CD4-positive, alpha-beta memory T cell (primary cell): ENCODE measurements at regions of chr12 and their contacts with region 1.

Region 1: GRCh38 chr12:62603061-62603810 is 136.6 kb downstream of the MON2 start:
- DNase-seq: peak; percentile 85 to 91 (median 88)
- H3K4me3 ChIP-seq: peak overlapping the region; percentile 64 to 94
- H3K4me3 Mint-ChIP-seq: peak overlapping the region; percentile 86 to 97 (median 94)
- H3K27ac ChIP-seq: peak overlapping the region; percentile 100
- H3K27ac Mint-ChIP-seq: peak overlapping the region; percentile 93 to 100 (median 99)
- H3K4me1 ChIP-seq: peaks cover 39% of the 10 kb centered on the region
- H3K4me1 Mint-ChIP-seq: peaks cover 27 to 55% (median 35%) of the 10 kb centered on the region in 4 donors
- H3K27me3 ChIP-seq: no peaks in the 10 kb centered on the region
- H3K27me3 Mint-ChIP-seq: no peaks in the 10 kb centered on the region

Region 2: GRCh38 chr12:62435303-62436163 is 167.7 kb before region 1 on chr12:
- CTCF ChIA-PET with region 1: interaction called, 7 read pairs
- POLR2A ChIA-PET with region 1: interaction called, 11 read pairs
- intact Hi-C with region 1: no loop called
- DNase-seq: peak in 4 of 5 donors; percentile 17 to 22 (median 20)
- H3K4me3 ChIP-seq: peak overlapping the region; percentile 64 to 78
- H3K4me3 Mint-ChIP-seq: peak overlapping the region; percentile 79 to 90 (median 86)
- H3K27ac ChIP-seq: no peak overlapping the region
- H3K27ac Mint-ChIP-seq: peak overlapping the region in 3 of 7 donors; percentile 2 to 33 (median 29)
- H3K4me1 ChIP-seq: peaks cover 21% of the 10 kb centered on the region
- H3K4me1 Mint-ChIP-seq: peaks cover 8 to 21% (median 16%) of the 10 kb centered on the region in 4 donors
- H3K27me3 ChIP-seq: peaks cover 11% of the 10 kb centered on the region
- H3K27me3 Mint-ChIP-seq: peaks cover 5 to 6% of the 10 kb centered on the region in 2 donors

Region 3: GRCh38 chr12:62581288-62582064 is 21.8 kb before region 1 on chr12:
- CTCF ChIA-PET with region 1: interaction called, 19 read pairs
- POLR2A ChIA-PET with region 1: interaction called, 14 read pairs
- intact Hi-C with region 1: loop called (anchors 2 kb)
- DNase-seq: peak in 4 of 5 donors; percentile 34 to 49 (median 38)
- H3K4me3 ChIP-seq: no peak overlapping the region
- H3K4me3 Mint-ChIP-seq: no peak overlapping the region
- H3K27ac ChIP-seq: no peak overlapping the region
- H3K27ac Mint-ChIP-seq: no peak overlapping the region
- H3K4me1 ChIP-seq: no peaks in the 10 kb centered on the region
- H3K4me1 Mint-ChIP-seq: peaks cover 0 to 2% (median 0%) of the 10 kb centered on the region in 4 donors
- H3K27me3 ChIP-seq: no peaks in the 10 kb centered on the region
- H3K27me3 Mint-ChIP-seq: no peaks in the 10 kb centered on the region

Region 4: DNA sequence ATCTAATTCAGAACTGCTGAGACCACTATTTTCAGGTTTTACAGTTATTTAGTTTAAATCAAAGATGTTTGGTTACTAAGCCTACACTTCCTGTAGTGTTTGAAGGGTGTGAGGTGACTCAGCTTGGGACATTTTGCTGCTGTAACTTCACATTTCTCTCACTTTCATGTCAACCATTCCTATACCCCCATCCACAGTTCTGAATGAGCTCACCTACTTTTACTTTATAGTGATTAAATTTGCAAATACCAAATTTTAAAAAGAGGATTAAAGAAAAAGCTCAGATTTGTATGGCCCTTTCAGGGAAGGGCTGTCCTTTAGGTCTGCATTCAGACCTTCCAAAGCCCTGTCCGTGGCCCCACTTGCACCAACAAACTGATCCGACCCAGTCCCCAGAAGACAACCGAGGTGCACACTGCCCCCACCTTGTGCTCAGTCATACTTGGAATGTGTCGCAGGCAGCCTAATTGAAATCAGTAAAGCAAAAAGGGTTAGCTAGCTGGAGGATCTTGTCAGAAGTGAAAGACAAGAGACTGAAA is 37.7 kb after region 1 on chr12:
- CTCF ChIA-PET with region 1: no interaction called
- POLR2A ChIA-PET with region 1: interaction called, 16 read pairs
- intact Hi-C with region 1: loop called (anchors 2 kb)
- DNase-seq: peak in 4 of 5 donors; percentile 6 to 54 (median 19)
- H3K4me3 ChIP-seq: no peak overlapping the region
- H3K4me3 Mint-ChIP-seq: peak overlapping the region; percentile 21 to 74 (median 64)
- H3K27ac ChIP-seq: no peak overlapping the region
- H3K27ac Mint-ChIP-seq: peak overlapping the region in 6 of 7 donors; percentile 5 to 83 (median 38)
- H3K4me1 ChIP-seq: peaks cover 17% of the 10 kb centered on the region
- H3K4me1 Mint-ChIP-seq: peaks cover 9 to 15% (median 13%) of the 10 kb centered on the region in 4 donors
- H3K27me3 ChIP-seq: no peaks in the 10 kb centered on the region
- H3K27me3 Mint-ChIP-seq: peaks cover 1 to 2% of the 10 kb centered on the region in 2 donors

Region 5: GRCh38 chr12:62724947-62725447 is 121.8 kb after region 1 on chr12:
- CTCF ChIA-PET with region 1: no interaction called
- POLR2A ChIA-PET with region 1: no interaction called
- intact Hi-C with region 1: no loop called
- DNase-seq: no peak
- H3K4me3 ChIP-seq: no peak overlapping the region
- H3K4me3 Mint-ChIP-seq: no peak overlapping the region
- H3K27ac ChIP-seq: no peak overlapping the region
- H3K27ac Mint-ChIP-seq: no peak overlapping the region
- H3K4me1 ChIP-seq: no peaks in the 10 kb centered on the region
- H3K4me1 Mint-ChIP-seq: no peaks in the 10 kb centered on the region
- H3K27me3 ChIP-seq: no peaks in the 10 kb centered on the region
- H3K27me3 Mint-ChIP-seq: peaks cover 0 to 7% of the 10 kb centered on the region in 2 donors

Region 6: DNA sequence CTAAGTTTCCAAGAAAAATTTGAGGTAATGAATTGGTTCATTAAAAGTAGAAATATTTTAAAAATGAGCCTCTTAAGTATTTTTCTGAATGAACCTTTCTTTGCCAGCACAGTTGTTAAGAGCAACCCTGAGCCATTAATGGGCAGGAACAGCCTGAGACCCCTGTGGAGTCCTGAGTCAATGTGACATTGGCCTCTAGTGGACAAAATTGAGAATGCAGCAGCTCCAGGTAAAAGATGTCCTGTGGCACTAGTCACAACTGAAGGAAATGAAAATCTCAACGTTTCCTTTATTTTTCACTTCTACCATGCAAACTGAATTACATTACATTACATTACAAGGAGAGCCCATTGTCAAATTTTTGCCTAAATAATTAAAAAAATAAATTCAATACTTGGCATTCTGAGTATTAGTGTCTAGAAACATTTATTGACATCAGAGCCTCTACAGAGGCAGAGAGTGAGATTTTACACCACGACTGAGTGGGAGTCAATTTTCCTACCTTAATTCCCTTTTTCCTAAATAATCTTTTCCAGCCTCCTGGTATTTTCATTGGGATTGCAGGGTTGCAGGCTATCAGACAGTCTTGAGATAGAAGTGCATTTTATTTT is 196.0 kb after region 1 on chr12:
- CTCF ChIA-PET with region 1: interaction called, 16 read pairs
- POLR2A ChIA-PET with region 1: interaction called, 13 read pairs
- intact Hi-C with region 1: loop called (anchors 1 kb)
- DNase-seq: peak; percentile 32 to 52 (median 44)
- H3K4me3 ChIP-seq: no peak overlapping the region
- H3K4me3 Mint-ChIP-seq: no peak overlapping the region
- H3K27ac ChIP-seq: no peak overlapping the region
- H3K27ac Mint-ChIP-seq: no peak overlapping the region
- H3K4me1 ChIP-seq: no peaks in the 10 kb centered on the region
- H3K4me1 Mint-ChIP-seq: peaks cover 0 to 1% (median 0%) of the 10 kb centered on the region in 4 donors
- H3K27me3 ChIP-seq: no peaks in the 10 kb centered on the region
- H3K27me3 Mint-ChIP-seq: peaks cover 4 to 5% of the 10 kb centered on the region in 2 donors

Region 7: GRCh38 chr12:64222009-64222765 is 1619.0 kb after region 1 on chr12 and contains the start of gene KICS2:
- CTCF ChIA-PET with region 1: no interaction called
- POLR2A ChIA-PET with region 1: interaction called, 3 read pairs
- intact Hi-C with region 1: loop called (anchors 2 kb)
- DNase-seq: peak; percentile 91 to 94 (median 94)
- H3K4me3 ChIP-seq: peak within 1 kb of the TSS; percentile 69 to 71
- H3K4me3 Mint-ChIP-seq: peak within 1 kb of the TSS; percentile 94 to 99 (median 97)
- H3K27ac ChIP-seq: peak within 1 kb of the TSS; percentile 89
- H3K27ac Mint-ChIP-seq: peak within 1 kb of the TSS; percentile 92 to 100 (median 99)
- H3K4me1 ChIP-seq: peaks cover 37% of the 10 kb centered on the region
- H3K4me1 Mint-ChIP-seq: peaks cover 21 to 49% (median 34%) of the 10 kb centered on the region in 4 donors
- H3K27me3 ChIP-seq: no peaks in the 10 kb centered on the region
- H3K27me3 Mint-ChIP-seq: peaks cover 0 to 7% of the 10 kb centered on the region in 2 donors
- total RNA-seq, gene KICS2: 21.2 to 24.1 TPM